ENCODE measurements at regions of chr17 and their contacts with region 1.

Region 1: GRCh38 chr17:58006924-58007780 is at the start of gene SRSF1:
- DNase-seq: peak; percentile 95
- ATAC-seq: peak; percentile 89
- H3K4me3 Mint-ChIP-seq: peak within 1 kb of the TSS; percentile 100
- H3K27ac Mint-ChIP-seq: peak within 1 kb of the TSS; percentile 99
- H3K4me1 Mint-ChIP-seq: peaks cover 53% of the 10 kb centered on the region
- H3K27me3 Mint-ChIP-seq: peaks cover 3% of the 10 kb centered on the region
- CTCF ChIP-seq: no peak
- total RNA-seq, gene SRSF1: 288 and 289 TPM in 2 replicates

Region 2: GRCh38 chr17:56977673-56978395 is 1029.3 kb before region 1 on chr17 and contains the start of gene SCPEP1:
- CTCF ChIA-PET with region 1: no interaction called
- POLR2A ChIA-PET with region 1: no interaction called
- intact Hi-C with region 1: loop called (anchors 10 kb)
- DNase-seq: peak; percentile 67
- ATAC-seq: peak; percentile 97
- H3K4me3 Mint-ChIP-seq: peak within 1 kb of the TSS; percentile 91
- H3K27ac Mint-ChIP-seq: peak within 1 kb of the TSS; percentile 89
- H3K4me1 Mint-ChIP-seq: peaks cover 26% of the 10 kb centered on the region
- H3K27me3 Mint-ChIP-seq: no peaks in the 10 kb centered on the region
- CTCF ChIP-seq: no peak
- total RNA-seq, gene SCPEP1: 32.0 and 35.2 TPM in 2 replicates

Region 3: DNA sequence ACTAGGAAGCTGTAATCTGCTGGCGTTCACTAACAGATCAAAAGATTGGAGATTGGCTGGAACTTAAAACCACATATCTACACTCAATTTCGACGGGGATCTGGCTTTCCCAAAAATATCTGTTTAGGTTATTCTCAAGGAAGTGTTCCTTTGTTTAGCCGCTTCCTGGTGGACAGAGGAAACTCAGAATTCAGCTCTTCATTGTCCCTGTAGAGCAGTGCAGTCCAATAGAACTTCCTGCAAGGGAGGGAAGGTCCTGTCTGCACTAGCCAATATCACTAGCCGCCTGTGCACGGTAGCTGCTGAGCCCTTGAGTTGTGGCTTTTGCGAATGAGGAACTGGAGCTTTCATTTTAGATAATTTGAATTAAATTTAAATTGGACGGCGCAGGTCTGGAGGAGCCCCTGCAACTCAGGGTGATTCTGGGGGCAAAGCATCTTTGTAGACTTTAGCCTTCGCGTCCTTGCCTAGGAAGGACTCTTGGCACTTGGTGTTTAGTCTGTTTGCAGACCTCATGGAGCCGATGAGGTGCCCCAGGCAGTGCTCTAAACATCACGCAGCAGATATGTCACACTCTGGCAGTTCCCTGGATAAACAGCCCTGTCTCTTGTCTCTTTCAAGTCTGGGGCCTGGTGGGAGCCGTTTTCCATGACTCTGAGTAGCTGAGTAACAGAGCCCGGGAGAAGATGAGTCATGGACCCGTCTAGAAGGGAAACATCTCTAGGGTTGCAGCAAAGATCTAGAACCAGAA is 384.3 kb before region 1 on chr17:
- CTCF ChIA-PET with region 1: no interaction called
- POLR2A ChIA-PET with region 1: no interaction called
- intact Hi-C with region 1: loop called (anchors 10 kb)
- DNase-seq: no peak
- ATAC-seq: peak; percentile 82
- H3K4me3 Mint-ChIP-seq: peak overlapping the region; percentile 77
- H3K27ac Mint-ChIP-seq: peak overlapping the region; percentile 89
- H3K4me1 Mint-ChIP-seq: peaks cover 60% of the 10 kb centered on the region
- H3K27me3 Mint-ChIP-seq: no peaks in the 10 kb centered on the region
- CTCF ChIP-seq: no peak

Region 4: GRCh38 chr17:57980522-57980921 is 26.6 kb before region 1 on chr17:
- CTCF ChIA-PET with region 1: no interaction called
- POLR2A ChIA-PET with region 1: interaction called, 10 read pairs
- intact Hi-C with region 1: no loop called
- DNase-seq: no peak
- ATAC-seq: no peak
- H3K4me3 Mint-ChIP-seq: no peak overlapping the region
- H3K27ac Mint-ChIP-seq: no peak overlapping the region
- H3K4me1 Mint-ChIP-seq: peaks cover 42% of the 10 kb centered on the region
- H3K27me3 Mint-ChIP-seq: no peaks in the 10 kb centered on the region
- CTCF ChIP-seq: no peak

Region 5: DNA sequence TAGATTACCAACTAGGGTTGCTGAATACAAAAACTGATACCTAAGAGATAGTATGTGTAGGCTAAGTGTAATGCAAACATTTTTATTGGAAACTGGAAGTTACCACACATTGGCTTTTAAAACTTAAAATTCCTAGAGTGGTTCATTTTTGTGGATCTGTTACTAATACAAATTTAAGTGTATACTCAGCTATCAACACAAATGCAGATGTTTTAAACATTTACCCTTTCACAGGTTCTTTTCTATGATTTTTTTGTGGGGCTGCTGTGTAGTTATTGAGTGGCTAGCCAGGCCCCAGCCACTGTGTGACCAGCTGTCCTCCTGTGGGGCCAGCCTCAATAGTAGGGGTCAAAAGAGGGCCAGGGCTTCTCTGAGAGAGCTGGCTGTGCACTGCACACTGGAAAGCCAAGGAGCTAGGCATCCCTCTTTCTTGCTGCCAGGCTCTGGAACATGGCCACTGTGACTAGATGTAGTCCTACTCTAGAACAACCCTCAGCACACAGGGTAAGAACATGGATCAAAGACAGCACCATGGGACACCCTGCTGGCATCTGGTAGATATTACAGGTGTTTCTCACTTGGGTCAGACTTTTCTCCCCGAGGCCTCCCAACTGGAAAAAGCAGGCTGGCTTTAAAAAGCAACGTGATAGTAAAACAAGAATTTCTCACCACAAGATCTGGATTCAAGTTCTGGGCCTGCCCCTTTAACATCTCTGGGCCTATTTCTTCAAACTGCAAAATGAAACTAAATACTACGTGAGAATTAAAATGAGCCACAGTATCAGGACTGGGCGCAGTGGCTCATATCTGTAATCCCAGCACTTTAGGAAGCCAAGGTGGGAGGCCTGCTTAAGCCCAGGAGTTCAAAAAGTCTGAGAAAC is 11.8 kb before region 1 on chr17:
- CTCF ChIA-PET with region 1: interaction called, 16 read pairs
- POLR2A ChIA-PET with region 1: interaction called, 32 read pairs
- intact Hi-C with region 1: loop called (anchors 1 kb)
- DNase-seq: peak; percentile 22
- ATAC-seq: peak; percentile 94
- H3K4me3 Mint-ChIP-seq: no peak overlapping the region
- H3K27ac Mint-ChIP-seq: peak overlapping the region; percentile 46
- H3K4me1 Mint-ChIP-seq: peaks cover 38% of the 10 kb centered on the region
- H3K27me3 Mint-ChIP-seq: no peaks in the 10 kb centered on the region
- CTCF ChIP-seq: peak; percentile 25

Region 6: DNA sequence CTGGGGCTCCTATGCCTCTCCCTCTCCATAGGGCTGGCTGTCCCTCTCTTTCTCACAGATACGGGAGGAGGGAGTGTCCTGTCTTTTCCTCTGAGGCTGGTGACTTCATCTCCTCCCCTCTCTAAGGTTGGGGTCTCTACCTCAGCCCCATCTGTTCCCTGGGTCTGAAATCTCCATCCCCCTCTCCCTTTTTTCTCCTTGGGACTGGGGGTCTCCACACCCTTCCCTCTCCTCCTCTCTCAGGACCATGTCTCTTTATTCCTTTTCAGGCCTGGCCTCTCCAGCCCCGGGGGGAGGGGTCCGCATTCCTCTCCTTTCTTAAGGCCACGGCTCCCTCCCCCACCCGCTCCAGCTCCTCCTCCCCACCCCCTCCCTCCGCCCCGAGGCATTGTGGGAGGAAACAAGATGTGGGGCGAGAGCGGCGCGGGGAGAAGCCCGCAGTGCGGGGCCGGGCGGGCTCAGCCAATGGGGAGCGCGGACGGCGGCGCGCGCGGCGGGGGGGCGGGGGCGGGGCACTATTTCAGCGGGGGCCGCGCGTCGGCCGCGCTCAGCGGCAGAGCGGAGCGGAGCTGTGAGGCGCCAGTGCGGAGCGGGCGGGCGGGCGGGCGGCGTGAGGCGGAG is 75.8 kb after region 1 on chr17 and contains the start of gene DYNLL2:
- CTCF ChIA-PET with region 1: no interaction called
- POLR2A ChIA-PET with region 1: interaction called, 55 read pairs
- intact Hi-C with region 1: loop called (anchors 1 kb)
- DNase-seq: peak; percentile 73
- ATAC-seq: peak; percentile 85
- H3K4me3 Mint-ChIP-seq: peak within 1 kb of the TSS; percentile 86
- H3K27ac Mint-ChIP-seq: peak within 1 kb of the TSS; percentile 80
- H3K4me1 Mint-ChIP-seq: peaks cover 35% of the 10 kb centered on the region
- H3K27me3 Mint-ChIP-seq: no peaks in the 10 kb centered on the region
- CTCF ChIP-seq: no peak
- total RNA-seq, gene DYNLL2: 19.5 and 19.6 TPM in 2 replicates

Region 7: DNA sequence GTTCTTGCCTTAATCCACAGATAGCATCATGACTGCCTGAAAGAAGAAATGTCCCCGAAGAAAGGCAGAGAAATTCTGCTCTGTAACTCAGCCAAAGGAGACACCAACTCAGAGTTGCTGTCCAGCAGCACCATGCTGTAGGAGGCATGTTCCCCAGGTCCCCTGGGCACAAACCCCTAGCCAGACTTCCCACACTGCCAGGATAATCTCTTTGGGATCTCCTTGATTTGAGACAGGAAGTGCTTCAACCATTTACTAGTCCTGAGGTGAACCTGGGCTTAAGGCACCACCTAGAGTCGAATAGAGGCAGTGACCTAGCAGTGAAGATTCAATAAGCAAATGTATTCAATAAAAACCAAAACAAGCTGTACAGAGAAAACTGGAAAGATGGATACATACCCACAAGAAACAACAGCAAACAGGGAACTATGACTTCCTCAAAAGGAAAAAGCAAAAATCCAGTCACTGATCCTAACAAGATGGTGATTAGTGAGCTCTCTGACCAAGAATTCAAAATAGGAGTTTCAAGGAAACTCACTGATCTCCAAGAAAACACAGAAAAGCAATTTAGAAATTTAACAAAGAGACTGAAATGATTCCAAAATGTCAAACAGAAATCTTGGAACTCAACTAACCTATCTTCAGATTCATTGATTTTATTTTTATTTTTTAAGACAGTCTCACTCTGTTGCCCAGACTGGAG is 165.4 kb after region 1 on chr17:
- CTCF ChIA-PET with region 1: no interaction called
- POLR2A ChIA-PET with region 1: no interaction called
- intact Hi-C with region 1: no loop called
- DNase-seq: no peak
- ATAC-seq: no peak
- H3K4me3 Mint-ChIP-seq: no peak overlapping the region
- H3K27ac Mint-ChIP-seq: no peak overlapping the region
- H3K4me1 Mint-ChIP-seq: no peaks in the 10 kb centered on the region
- H3K27me3 Mint-ChIP-seq: peaks cover 42% of the 10 kb centered on the region
- CTCF ChIP-seq: no peak

Region 8: DNA sequence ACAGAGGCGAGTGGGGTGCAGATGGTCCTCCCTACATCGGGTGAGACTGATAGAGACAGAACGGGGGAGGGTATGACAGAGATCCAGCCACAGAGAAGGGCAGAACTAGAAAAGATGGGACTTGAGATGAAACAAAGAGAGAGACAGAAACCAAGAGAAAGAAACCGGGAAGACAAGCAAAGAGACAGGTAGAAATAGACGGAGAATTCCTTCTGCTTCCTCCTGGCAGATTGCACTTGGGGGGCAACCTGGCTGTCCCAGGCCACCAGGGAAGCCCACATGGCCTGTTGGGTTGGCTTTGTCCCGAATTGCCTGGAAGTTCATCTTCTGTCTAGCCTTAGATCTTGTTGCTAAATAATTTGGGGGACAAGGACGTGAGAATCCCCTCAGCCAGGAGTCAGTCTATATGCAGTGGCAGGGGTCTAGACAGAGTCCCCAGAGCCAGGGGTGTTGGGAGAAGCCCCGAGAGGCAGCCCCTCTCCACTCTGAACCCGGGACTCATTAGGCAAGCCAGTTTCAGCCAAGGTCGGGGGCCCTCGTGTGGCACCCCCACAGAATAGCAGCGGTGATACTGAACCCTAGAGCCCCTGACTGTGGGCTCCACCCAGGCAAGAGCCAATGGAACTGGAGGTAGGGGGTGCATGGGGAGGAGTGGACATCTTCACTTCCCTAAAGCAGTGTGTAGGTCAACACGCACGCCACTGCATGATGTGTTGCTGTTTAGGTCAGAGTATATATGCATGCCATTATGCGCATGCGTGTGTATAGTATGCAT is 322.1 kb after region 1 on chr17:
- CTCF ChIA-PET with region 1: no interaction called
- POLR2A ChIA-PET with region 1: no interaction called
- intact Hi-C with region 1: loop called (anchors 5 kb)
- DNase-seq: peak; percentile 75
- ATAC-seq: peak; percentile 36
- H3K4me3 Mint-ChIP-seq: peak overlapping the region; percentile 100
- H3K27ac Mint-ChIP-seq: peak overlapping the region; percentile 93
- H3K4me1 Mint-ChIP-seq: peaks cover 65% of the 10 kb centered on the region
- H3K27me3 Mint-ChIP-seq: peaks cover 2% of the 10 kb centered on the region
- CTCF ChIP-seq: no peak

Measured in activated B cell treated with CpG ODN at 0.5 μM for 24 hours (primary cell).